ENCODE measurements at regions of chr12 and their contacts with region 1.

Region 1: GRCh38 chr12:90959538-90960139 is 4.7 kb upstream of the CCER1 start:
- DNase-seq: no peak
- H3K4me3 ChIP-seq: no peak overlapping the region
- CTCF ChIP-seq: peak; percentile 55

Region 2: DNA sequence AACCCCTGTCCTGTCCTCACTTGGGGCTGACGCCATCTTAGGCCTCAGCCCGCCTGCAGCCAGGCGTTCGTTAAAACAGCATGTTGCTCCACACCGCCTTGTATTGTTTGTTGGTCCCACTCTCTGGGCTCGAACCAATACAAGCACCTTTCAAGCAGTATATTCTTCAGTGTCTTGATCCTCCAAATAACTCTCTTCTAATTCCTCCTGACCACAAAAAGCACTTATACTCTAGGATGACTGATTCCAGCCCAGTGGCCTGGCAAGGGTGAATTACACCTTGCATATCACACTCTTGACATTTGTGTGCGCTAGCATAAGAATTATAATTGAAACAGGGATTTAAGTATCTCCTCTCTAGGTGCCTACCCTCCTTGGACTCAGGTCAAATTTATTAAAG is 11.8 kb before region 1 on chr12:
- CTCF ChIA-PET with region 1: interaction called, 34 read pairs
- POLR2A ChIA-PET with region 1: no interaction called
- DNase-seq: no peak
- H3K4me3 ChIP-seq: no peak overlapping the region
- CTCF ChIP-seq: no peak

Region 3: DNA sequence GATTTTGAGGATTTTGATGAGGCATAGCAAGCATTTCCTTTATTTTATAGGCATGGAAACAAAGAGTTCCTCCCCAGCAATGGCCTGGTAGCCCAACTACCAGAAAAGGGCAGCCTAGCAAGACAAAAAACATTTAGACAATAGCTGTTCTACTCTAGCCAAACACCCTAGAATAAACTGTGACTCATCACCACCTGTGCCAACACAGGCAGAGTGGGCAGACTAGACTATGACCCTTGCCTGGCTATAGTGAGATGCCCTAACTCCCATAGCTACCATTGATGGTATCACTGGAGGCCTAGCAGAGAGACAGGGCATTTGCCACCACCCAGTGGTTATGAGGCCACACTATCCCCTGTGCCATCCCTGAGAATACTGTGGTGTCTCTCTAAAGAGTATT is 10.8 kb after region 1 on chr12:
- CTCF ChIA-PET with region 1: interaction called, 17 read pairs
- POLR2A ChIA-PET with region 1: no interaction called
- DNase-seq: no peak
- H3K4me3 ChIP-seq: no peak overlapping the region
- CTCF ChIP-seq: no peak

Region 4: DNA sequence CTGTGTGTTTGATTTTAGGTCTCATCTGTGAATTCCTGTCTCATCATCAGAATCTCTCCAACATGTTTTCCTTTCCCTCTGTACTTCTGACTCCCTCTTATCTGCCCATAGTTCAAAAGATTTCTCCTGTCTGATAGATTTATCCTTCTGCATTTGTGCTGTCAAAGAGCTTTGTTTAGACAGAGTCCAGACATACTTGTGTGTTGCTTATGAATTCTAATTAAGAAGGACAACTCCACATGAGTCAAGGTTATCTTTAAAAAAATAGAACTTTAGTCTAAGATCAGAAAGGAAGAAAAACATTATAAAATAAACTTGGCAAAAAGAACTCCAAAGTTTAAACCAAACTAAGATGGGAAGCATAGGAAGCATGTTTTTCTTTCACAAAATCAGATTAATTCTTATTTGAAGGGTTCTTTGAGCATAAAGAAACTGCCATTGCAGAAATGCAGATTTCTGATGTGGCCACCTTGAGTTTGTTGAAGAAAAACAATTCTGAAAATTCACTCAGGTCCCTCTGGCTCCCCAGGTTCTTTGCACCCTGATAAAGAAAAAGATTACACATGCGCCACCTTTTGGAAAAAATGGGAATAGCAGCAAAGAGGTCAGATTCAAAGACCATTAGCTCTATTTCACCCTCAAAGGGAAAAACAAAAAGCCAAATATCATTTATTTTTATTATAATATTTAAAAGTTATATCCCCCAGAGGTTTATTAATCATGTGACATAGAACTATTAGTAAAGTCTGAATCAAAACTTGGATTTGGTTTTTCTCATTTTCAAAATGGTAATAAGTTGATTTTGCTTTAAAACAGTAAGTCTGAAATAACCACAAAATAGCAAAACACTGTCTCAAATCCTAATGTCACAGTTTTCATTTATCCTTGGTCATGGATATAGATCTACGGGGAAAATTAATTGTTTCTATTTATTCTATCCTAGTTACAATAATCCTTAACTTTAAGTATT is 366.7 kb after region 1 on chr12:
- CTCF ChIA-PET with region 1: interaction called, 10 read pairs
- POLR2A ChIA-PET with region 1: no interaction called
- DNase-seq: no peak
- H3K4me3 ChIP-seq: no peak overlapping the region
- CTCF ChIP-seq: peak; percentile 59

Region 5: DNA sequence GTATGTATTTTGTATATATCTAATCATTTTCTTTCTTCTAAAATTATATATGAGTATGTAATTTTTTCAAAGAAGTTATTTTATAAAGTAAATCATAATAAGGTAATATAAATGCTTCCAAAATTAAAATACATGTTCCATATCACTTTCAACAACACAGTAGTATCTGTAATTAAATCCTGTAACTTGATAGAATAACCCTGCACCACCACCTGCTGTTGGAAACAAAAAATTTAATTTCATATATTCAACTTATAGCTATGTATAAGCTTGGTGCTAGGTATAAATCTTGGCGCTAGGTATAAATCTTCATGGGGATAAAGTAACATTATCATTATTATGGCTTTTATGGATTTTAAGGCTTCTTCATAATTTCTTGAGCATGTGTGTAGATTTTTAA is 372.7 kb after region 1 on chr12:
- CTCF ChIA-PET with region 1: interaction called, 11 read pairs
- POLR2A ChIA-PET with region 1: no interaction called
- DNase-seq: no peak
- H3K4me3 ChIP-seq: no peak overlapping the region
- CTCF ChIP-seq: no peak

Region 6: DNA sequence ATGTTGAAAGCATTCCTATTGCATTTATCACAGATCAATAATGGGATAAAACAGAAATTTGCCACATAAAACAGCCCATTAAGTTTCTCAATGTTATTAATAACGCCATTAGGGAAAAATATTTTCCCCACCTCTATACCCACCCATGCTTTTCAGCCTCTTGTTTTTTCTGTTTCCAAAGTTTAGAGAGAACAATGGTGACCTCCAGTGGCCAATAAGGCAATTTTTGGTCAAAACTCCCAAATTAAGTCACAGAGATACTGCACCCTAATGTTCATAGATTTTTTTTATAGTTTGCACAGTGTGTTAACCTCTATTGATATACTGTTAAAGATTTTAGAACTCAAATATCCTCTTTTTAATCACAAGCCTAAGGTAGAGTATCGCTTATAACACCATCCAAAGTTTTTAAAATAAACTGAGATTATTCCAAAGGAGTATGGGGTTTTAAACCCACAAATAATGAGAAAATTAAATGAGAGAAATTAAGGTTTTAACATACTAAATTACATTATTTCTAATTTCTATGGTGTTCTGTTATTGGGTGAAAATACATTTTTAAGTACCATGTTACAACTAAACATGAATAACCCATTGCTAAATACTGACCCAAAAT is 407.7 kb after region 1 on chr12:
- CTCF ChIA-PET with region 1: interaction called, 19 read pairs
- POLR2A ChIA-PET with region 1: no interaction called
- DNase-seq: no peak
- H3K4me3 ChIP-seq: no peak overlapping the region
- CTCF ChIP-seq: peak; percentile 31